ENCODE measurements at regions of chr13 and their contacts with region 1.

Region 1: GRCh38 chr13:99392470-99393135 is 85.4 kb upstream of the GPR183 start:
- DNase-seq: no peak
- H3K4me3 ChIP-seq: no peak overlapping the region
- H3K27ac ChIP-seq: no peak overlapping the region
- H3K4me1 ChIP-seq: no peaks in the 10 kb centered on the region
- H3K27me3 ChIP-seq: no peaks in the 10 kb centered on the region
- CTCF ChIP-seq: no peak
- EP300 ChIP-seq: no peak
- POLR2A ChIP-seq: no peak
- RAD21 ChIP-seq: no peak

Region 2: GRCh38 chr13:99312493-99312883 is 80.1 kb before region 1 on chr13:
- CTCF ChIA-PET with region 1: no interaction called
- POLR2A ChIA-PET with region 1: no interaction called
- DNase-seq: no peak
- H3K4me3 ChIP-seq: no peak overlapping the region
- H3K27ac ChIP-seq: no peak overlapping the region
- H3K4me1 ChIP-seq: peaks cover 0 to 3% (median 0%) of the 10 kb centered on the region in 4 experiments; a peak in 1 of 7 replicates
- H3K27me3 ChIP-seq: no peaks in the 10 kb centered on the region
- CTCF ChIP-seq: no peak
- EP300 ChIP-seq: no peak
- POLR2A ChIP-seq: no peak
- RAD21 ChIP-seq: no peak

Region 3: GRCh38 chr13:99380921-99381645 is 11.5 kb before region 1 on chr13:
- CTCF ChIA-PET with region 1: interaction called, 31 read pairs
- POLR2A ChIA-PET with region 1: interaction called, 3 read pairs
- DNase-seq: peak in 1 of 2 experiments; percentile 19
- H3K4me3 ChIP-seq: no peak overlapping the region
- H3K27ac ChIP-seq: no peak overlapping the region
- H3K4me1 ChIP-seq: peaks cover 2 to 19% (median 10%) of the 10 kb centered on the region in 4 experiments
- H3K27me3 ChIP-seq: no peaks in the 10 kb centered on the region
- CTCF ChIP-seq: no peak
- EP300 ChIP-seq: no peak
- POLR2A ChIP-seq: no peak
- RAD21 ChIP-seq: no peak